ENCODE measurements at regions of chr12 and their contacts with region 1.

Region 1: GRCh38 chr12:14845350-14845750 is 2.0 kb upstream of the ART4 start:
- DNase-seq: peak; percentile 56
- ATAC-seq: no peak
- H3K4me3 ChIP-seq: no peak overlapping the region
- H3K27ac ChIP-seq: no peak overlapping the region
- H3K4me1 ChIP-seq: peaks cover 43% of the 10 kb centered on the region
- H3K27me3 ChIP-seq: no peaks in the 10 kb centered on the region; a peak in 1 of 5 replicates
- CTCF ChIP-seq: peak; percentile 75
- EP300 ChIP-seq: no peak
- POLR2A ChIP-seq: no peak
- RAD21 ChIP-seq: peak; percentile 65

Region 2: GRCh38 chr12:14756334-14757143 is 88.8 kb before region 1 on chr12:
- CTCF ChIA-PET with region 1: no interaction called
- POLR2A ChIA-PET with region 1: no interaction called
- in situ Hi-C with region 1: no loop called
- intact Hi-C with region 1: no loop called
- DNase-seq: peak; percentile 45
- ATAC-seq: peak; percentile 85
- H3K4me3 ChIP-seq: peak overlapping the region in 2 of 3 experiments; percentile 11 to 33; a peak in 2 of 6 replicates
- H3K27ac ChIP-seq: no peak overlapping the region
- H3K4me1 ChIP-seq: peaks cover 19% of the 10 kb centered on the region
- H3K27me3 ChIP-seq: no peaks in the 10 kb centered on the region
- CTCF ChIP-seq: peak; percentile 72
- EP300 ChIP-seq: no peak
- POLR2A ChIP-seq: no peak
- RAD21 ChIP-seq: peak; percentile 20; the same call in 1 of the 2 replicates

Region 3: GRCh38 chr12:14769969-14770495 is 75.3 kb before region 1 on chr12:
- CTCF ChIA-PET with region 1: no interaction called
- POLR2A ChIA-PET with region 1: interaction called, 12 read pairs
- in situ Hi-C with region 1: no loop called
- intact Hi-C with region 1: loop called (anchors 2 kb)
- DNase-seq: peak; percentile 83
- ATAC-seq: peak; percentile 75
- H3K4me3 ChIP-seq: peak overlapping the region; percentile 70 to 92 (median 79)
- H3K27ac ChIP-seq: peak overlapping the region; percentile 95
- H3K4me1 ChIP-seq: peaks cover 29% of the 10 kb centered on the region
- H3K27me3 ChIP-seq: no peaks in the 10 kb centered on the region; a peak in 1 of 5 replicates
- CTCF ChIP-seq: peak; percentile 87
- EP300 ChIP-seq: no peak
- POLR2A ChIP-seq: peak; percentile 77 to 78
- RAD21 ChIP-seq: peak; percentile 60

Region 4: GRCh38 chr12:14810953-14811483 is 34.3 kb before region 1 on chr12:
- CTCF ChIA-PET with region 1: interaction called, 6 read pairs
- POLR2A ChIA-PET with region 1: no interaction called
- in situ Hi-C with region 1: no loop called
- intact Hi-C with region 1: loop called (anchors 1 kb)
- DNase-seq: peak; percentile 44
- ATAC-seq: peak; percentile 90
- H3K4me3 ChIP-seq: no peak overlapping the region
- H3K27ac ChIP-seq: no peak overlapping the region
- H3K4me1 ChIP-seq: peaks cover 10% of the 10 kb centered on the region
- H3K27me3 ChIP-seq: no peaks in the 10 kb centered on the region
- CTCF ChIP-seq: peak; percentile 76
- EP300 ChIP-seq: no peak
- POLR2A ChIP-seq: no peak
- RAD21 ChIP-seq: peak; percentile 71

Region 5: DNA sequence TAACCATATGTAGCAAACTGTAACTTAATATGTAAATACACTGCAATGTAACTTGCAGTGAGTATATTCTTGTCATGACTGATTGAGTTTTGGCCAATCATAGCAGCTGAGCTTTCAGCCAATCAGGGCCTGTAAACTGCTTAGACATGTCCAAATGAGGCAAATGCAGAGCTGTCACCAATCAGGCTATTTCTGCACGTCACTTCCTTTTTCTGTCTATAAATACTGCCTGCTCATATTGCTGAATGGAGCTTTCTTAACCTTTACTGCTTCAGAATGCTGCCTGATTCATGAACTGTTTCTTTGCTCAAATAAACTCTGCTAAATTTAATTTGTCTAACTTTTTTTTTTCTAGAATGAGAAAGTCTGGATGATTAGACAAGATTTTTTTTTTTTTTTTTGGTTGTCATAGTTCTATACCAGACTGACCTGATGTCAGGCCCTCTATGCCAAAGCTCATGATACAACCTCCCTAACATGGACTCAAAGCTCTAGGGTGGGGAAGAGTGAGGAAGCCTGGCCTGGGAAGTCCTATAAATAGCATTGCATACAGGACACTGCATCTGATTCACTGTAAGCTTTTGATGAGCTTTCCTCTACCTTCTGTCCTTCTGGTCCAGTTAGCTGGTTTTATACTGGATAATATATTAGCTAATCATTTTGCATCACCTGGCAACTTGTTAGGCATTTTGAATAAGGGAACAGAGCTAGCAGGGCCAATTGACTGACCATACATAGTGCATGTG is 28.3 kb after region 1 on chr12:
- CTCF ChIA-PET with region 1: no interaction called
- POLR2A ChIA-PET with region 1: no interaction called
- in situ Hi-C with region 1: no loop called
- intact Hi-C with region 1: no loop called
- DNase-seq: no peak
- ATAC-seq: no peak
- H3K4me3 ChIP-seq: no peak overlapping the region
- H3K27ac ChIP-seq: no peak overlapping the region
- H3K4me1 ChIP-seq: no peaks in the 10 kb centered on the region
- H3K27me3 ChIP-seq: no peaks in the 10 kb centered on the region
- CTCF ChIP-seq: no peak
- EP300 ChIP-seq: no peak
- POLR2A ChIP-seq: no peak
- RAD21 ChIP-seq: no peak

Region 6: GRCh38 chr12:14937689-14938088 is 92.3 kb after region 1 on chr12:
- CTCF ChIA-PET with region 1: no interaction called
- POLR2A ChIA-PET with region 1: no interaction called
- in situ Hi-C with region 1: no loop called
- intact Hi-C with region 1: loop called (anchors 5 kb)
- DNase-seq: no peak
- ATAC-seq: peak; percentile 81
- H3K4me3 ChIP-seq: no peak overlapping the region
- H3K27ac ChIP-seq: no peak overlapping the region
- H3K4me1 ChIP-seq: peaks cover 12% of the 10 kb centered on the region; the same call in 1 of the 2 replicates
- H3K27me3 ChIP-seq: no peaks in the 10 kb centered on the region
- CTCF ChIP-seq: no peak
- EP300 ChIP-seq: no peak
- POLR2A ChIP-seq: no peak
- RAD21 ChIP-seq: no peak

Region 7: GRCh38 chr12:15011162-15011561 is 165.8 kb after region 1 on chr12:
- CTCF ChIA-PET with region 1: no interaction called
- POLR2A ChIA-PET with region 1: no interaction called
- in situ Hi-C with region 1: no loop called
- intact Hi-C with region 1: no loop called
- DNase-seq: no peak
- ATAC-seq: peak; percentile 90
- H3K4me3 ChIP-seq: no peak overlapping the region
- H3K27ac ChIP-seq: no peak overlapping the region
- H3K4me1 ChIP-seq: no peaks in the 10 kb centered on the region
- H3K27me3 ChIP-seq: no peaks in the 10 kb centered on the region
- CTCF ChIP-seq: no peak
- EP300 ChIP-seq: no peak
- POLR2A ChIP-seq: no peak
- RAD21 ChIP-seq: no peak

Measured in HepG2 (cell line).